CD4-positive, alpha-beta memory T cell (primary cell): ENCODE measurements at regions of chr4 and their contacts with region 1.

Region 1: GRCh38 chr4:148441986-148442831 is at the start of gene NR3C2:
- DNase-seq: peak; percentile 96 to 100 (median 98)
- H3K4me3 ChIP-seq: peak within 1 kb of the TSS; percentile 82 to 97
- H3K4me3 Mint-ChIP-seq: peak within 1 kb of the TSS; percentile 99 to 100 (median 100)
- H3K27ac ChIP-seq: peak within 1 kb of the TSS; percentile 92
- H3K27ac Mint-ChIP-seq: peak within 1 kb of the TSS; percentile 98 to 99 (median 99)
- H3K4me1 ChIP-seq: peaks cover 53% of the 10 kb centered on the region
- H3K4me1 Mint-ChIP-seq: peaks cover 45 to 72% (median 52%) of the 10 kb centered on the region in 4 donors
- H3K27me3 ChIP-seq: no peaks in the 10 kb centered on the region
- H3K27me3 Mint-ChIP-seq: no peaks in the 10 kb centered on the region
- total RNA-seq, gene NR3C2: 46.0 to 50.9 TPM

Region 2: DNA sequence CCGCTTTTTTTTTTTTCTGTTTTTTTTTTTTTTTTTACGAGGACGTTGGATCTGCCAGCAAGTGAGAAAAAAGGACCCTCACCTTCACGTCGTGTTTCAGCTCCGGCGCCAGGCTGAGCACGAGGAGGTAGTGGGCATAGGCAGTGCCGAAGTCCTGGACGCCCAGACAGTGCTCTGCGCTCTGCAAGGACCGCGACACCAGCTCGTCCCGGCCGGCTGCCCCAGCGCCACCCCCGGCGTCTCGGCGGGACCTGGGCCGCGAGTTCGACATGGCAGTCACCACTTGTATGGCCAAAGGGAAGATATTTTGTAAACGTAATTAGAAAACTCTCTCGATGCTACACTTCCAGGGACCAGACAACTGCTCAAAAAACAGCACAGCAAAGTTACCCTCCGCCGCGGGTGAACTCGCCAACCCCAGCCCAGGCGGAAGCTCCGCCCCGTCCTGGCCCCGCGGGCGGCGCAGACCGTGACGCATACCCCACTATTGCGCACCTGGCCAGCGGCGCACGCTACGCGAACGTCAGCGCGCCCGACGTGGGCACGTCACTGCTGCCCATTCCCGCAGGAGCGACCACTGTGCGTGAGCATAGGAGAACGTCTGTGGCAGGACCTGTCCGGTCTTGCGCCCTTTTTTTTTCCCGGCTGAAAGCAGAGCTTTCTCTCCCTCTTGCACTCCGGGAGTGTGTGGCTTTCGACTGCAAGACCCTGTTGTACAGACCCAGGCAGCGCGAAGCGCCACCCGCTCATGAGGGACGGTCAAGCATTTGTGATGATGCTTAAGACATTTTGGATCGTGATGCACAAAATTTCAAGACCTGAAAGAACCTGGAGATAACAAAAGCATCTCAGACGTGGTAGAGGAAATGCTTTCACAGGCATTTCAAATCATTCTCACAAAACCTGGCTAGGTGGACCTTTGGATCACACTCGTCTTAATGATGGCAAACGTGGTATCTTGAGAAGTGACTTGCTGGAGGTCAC is 758.2 kb before region 1 on chr4 and contains the start of gene PRMT9:
- CTCF ChIA-PET with region 1: no interaction called
- POLR2A ChIA-PET with region 1: interaction called, 11 read pairs
- intact Hi-C with region 1: loop called (anchors 1 kb)
- DNase-seq: peak; percentile 82 to 89 (median 85)
- H3K4me3 ChIP-seq: peak within 1 kb of the TSS; percentile 75 to 96
- H3K4me3 Mint-ChIP-seq: peak within 1 kb of the TSS; percentile 92 to 99 (median 96)
- H3K27ac ChIP-seq: peak within 1 kb of the TSS; percentile 89
- H3K27ac Mint-ChIP-seq: peak within 1 kb of the TSS; percentile 96 to 99 (median 98)
- H3K4me1 ChIP-seq: peaks cover 15% of the 10 kb centered on the region
- H3K4me1 Mint-ChIP-seq: peaks cover 25 to 42% (median 33%) of the 10 kb centered on the region in 4 donors
- H3K27me3 ChIP-seq: no peaks in the 10 kb centered on the region
- H3K27me3 Mint-ChIP-seq: peaks cover 3% of the 10 kb centered on the region in 2 donors
- total RNA-seq, gene PRMT9: 12.1 to 12.6 TPM

Region 3: DNA sequence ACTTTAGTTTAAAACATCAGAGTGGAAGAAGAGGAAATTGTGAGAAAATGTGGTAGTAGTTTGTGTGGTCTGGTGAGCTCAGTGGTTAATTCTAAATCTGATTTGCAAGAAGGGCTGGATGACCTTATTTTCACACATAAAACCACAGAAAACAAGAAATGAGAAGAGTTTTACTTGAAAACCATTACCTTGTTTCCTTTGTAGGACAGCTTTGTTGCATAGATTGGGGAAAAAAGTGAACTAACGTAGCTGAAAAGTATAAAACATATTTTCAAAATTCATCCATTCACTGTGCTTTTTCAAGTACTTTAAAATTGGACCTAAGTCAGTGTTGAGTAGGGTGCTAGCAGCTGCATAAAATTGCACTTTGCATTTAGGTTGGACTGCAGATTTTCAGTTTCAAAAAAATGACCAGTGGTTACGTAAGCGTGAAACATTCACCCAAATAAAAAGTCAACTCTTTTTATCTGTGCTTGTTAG is 499.0 kb before region 1 on chr4:
- CTCF ChIA-PET with region 1: no interaction called
- POLR2A ChIA-PET with region 1: interaction called, 15 read pairs
- intact Hi-C with region 1: no loop called
- DNase-seq: peak in 4 of 5 donors; percentile 35 to 51 (median 40)
- H3K4me3 ChIP-seq: no peak overlapping the region
- H3K4me3 Mint-ChIP-seq: peak overlapping the region in 7 of 8 donors; percentile 14 to 71 (median 54)
- H3K27ac ChIP-seq: peak overlapping the region; percentile 23
- H3K27ac Mint-ChIP-seq: peak overlapping the region; percentile 24 to 77 (median 53)
- H3K4me1 ChIP-seq: peaks cover 30% of the 10 kb centered on the region
- H3K4me1 Mint-ChIP-seq: peaks cover 23 to 32% (median 29%) of the 10 kb centered on the region in 4 donors
- H3K27me3 ChIP-seq: no peaks in the 10 kb centered on the region
- H3K27me3 Mint-ChIP-seq: no peaks in the 10 kb centered on the region

Region 4: GRCh38 chr4:148056869-148057268 is 385.3 kb before region 1 on chr4:
- CTCF ChIA-PET with region 1: interaction called, 13 read pairs
- POLR2A ChIA-PET with region 1: interaction called, 129 read pairs
- intact Hi-C with region 1: loop called (anchors 1 kb)
- DNase-seq: peak; percentile 37 to 77 (median 54)
- H3K4me3 ChIP-seq: no peak overlapping the region
- H3K4me3 Mint-ChIP-seq: peak overlapping the region in 6 of 8 donors; percentile 6 to 76 (median 44)
- H3K27ac ChIP-seq: peak overlapping the region; percentile 11
- H3K27ac Mint-ChIP-seq: peak overlapping the region; percentile 59 to 92 (median 85)
- H3K4me1 ChIP-seq: peaks cover 98% of the 10 kb centered on the region
- H3K4me1 Mint-ChIP-seq: peaks cover 71 to 98% (median 88%) of the 10 kb centered on the region in 4 donors
- H3K27me3 ChIP-seq: no peaks in the 10 kb centered on the region
- H3K27me3 Mint-ChIP-seq: no peaks in the 10 kb centered on the region

Region 5: DNA sequence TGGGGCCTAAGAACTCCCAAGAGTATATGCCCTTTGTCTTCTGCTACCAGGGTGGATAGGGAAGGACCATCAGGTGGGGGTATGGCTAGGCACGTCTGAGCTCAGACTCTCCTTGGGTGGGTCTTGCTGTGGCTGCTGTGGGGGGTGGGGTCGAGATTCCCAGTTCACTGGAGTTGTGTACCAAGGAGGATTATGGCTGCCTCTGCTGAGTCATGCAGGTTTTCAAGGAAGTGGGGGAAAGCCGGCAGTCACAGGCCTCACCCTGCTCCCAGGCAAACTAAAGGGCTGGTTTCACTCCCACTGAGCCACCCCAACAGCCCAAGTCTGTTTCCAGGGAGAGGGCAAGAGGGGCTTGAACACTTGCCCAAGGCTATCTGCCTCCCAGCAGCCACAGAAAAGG is 249.7 kb before region 1 on chr4:
- CTCF ChIA-PET with region 1: no interaction called
- POLR2A ChIA-PET with region 1: no interaction called
- intact Hi-C with region 1: no loop called
- DNase-seq: no peak
- H3K4me3 ChIP-seq: no peak overlapping the region
- H3K4me3 Mint-ChIP-seq: no peak overlapping the region
- H3K27ac ChIP-seq: no peak overlapping the region
- H3K27ac Mint-ChIP-seq: peak overlapping the region in 1 of 7 donors; percentile 23
- H3K4me1 ChIP-seq: no peaks in the 10 kb centered on the region
- H3K4me1 Mint-ChIP-seq: peaks cover 0 to 11% (median 3%) of the 10 kb centered on the region in 4 donors
- H3K27me3 ChIP-seq: no peaks in the 10 kb centered on the region
- H3K27me3 Mint-ChIP-seq: no peaks in the 10 kb centered on the region

Region 6: DNA sequence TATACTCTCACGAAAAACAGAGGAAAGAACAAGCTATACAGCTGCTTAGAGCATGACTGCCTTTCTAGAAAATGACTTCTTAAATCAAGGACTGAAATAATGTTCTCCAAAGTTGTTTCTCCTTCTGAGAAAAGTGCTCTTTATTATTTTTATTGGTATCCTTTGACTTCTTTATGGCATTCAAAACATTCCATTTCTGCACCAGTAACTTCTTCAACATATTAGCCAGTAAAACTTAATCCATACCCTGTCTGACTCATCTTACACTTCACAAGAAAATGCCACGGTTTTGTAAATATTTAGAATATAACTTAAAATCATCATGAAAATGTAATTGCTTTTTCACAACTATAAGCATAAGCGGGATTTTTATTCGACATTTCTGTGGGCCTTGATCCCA is 180.4 kb before region 1 on chr4:
- CTCF ChIA-PET with region 1: no interaction called
- POLR2A ChIA-PET with region 1: no interaction called
- intact Hi-C with region 1: no loop called
- DNase-seq: no peak
- H3K4me3 ChIP-seq: no peak overlapping the region
- H3K4me3 Mint-ChIP-seq: no peak overlapping the region
- H3K27ac ChIP-seq: no peak overlapping the region
- H3K27ac Mint-ChIP-seq: no peak overlapping the region
- H3K4me1 ChIP-seq: no peaks in the 10 kb centered on the region
- H3K4me1 Mint-ChIP-seq: peaks cover 12 to 39% (median 19%) of the 10 kb centered on the region in 4 donors
- H3K27me3 ChIP-seq: no peaks in the 10 kb centered on the region
- H3K27me3 Mint-ChIP-seq: no peaks in the 10 kb centered on the region

Region 7: DNA sequence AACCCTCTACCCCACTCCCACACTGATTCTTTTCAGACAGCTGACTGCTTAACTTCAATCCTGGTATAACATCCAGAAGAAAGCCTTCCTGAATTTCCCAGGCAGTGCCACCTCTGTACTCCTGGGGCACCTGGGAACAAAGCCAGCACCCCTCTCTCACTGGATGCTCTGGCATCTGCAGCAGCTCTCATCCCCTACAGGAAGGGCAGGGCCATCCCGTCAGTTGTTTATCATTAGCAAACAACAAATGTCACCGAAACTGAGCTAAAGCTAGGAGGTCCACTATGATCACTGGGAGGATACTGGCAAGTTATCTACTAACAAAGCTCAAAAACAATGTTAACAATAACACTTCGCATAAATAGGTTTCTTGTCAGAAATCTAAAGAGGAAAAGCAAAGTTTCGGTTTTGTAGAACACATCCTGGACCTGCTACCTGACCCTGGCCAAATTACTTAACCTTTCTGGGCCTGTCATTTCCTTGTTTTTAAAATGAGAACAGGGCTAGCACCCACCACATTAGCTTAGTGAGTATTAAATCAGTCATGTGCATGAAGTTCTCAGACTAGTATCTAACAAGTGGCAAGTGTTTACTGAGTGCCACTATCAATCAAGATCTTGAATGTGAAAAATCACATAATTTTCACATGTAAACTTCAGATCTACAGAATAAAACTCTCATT is 86.6 kb before region 1 on chr4:
- CTCF ChIA-PET with region 1: interaction called, 3 read pairs
- POLR2A ChIA-PET with region 1: interaction called, 12 read pairs
- intact Hi-C with region 1: no loop called
- DNase-seq: peak in 2 of 5 donors; percentile 4 to 11
- H3K4me3 ChIP-seq: peak overlapping the region in 1 of 2 donors; percentile 12
- H3K4me3 Mint-ChIP-seq: peak overlapping the region; percentile 41 to 80 (median 64)
- H3K27ac ChIP-seq: no peak overlapping the region
- H3K27ac Mint-ChIP-seq: peak overlapping the region; percentile 52 to 87 (median 77)
- H3K4me1 ChIP-seq: peaks cover 32% of the 10 kb centered on the region
- H3K4me1 Mint-ChIP-seq: peaks cover 26 to 54% (median 38%) of the 10 kb centered on the region in 4 donors
- H3K27me3 ChIP-seq: no peaks in the 10 kb centered on the region
- H3K27me3 Mint-ChIP-seq: no peaks in the 10 kb centered on the region

Region 8: GRCh38 chr4:148429206-148429605 is 13.0 kb before region 1 on chr4:
- CTCF ChIA-PET with region 1: interaction called, 6 read pairs
- POLR2A ChIA-PET with region 1: interaction called, 28 read pairs
- intact Hi-C with region 1: no loop called
- DNase-seq: no peak
- H3K4me3 ChIP-seq: no peak overlapping the region
- H3K4me3 Mint-ChIP-seq: peak overlapping the region in 4 of 8 donors; percentile 1 to 47 (median 28)
- H3K27ac ChIP-seq: no peak overlapping the region
- H3K27ac Mint-ChIP-seq: no peak overlapping the region
- H3K4me1 ChIP-seq: peaks cover 53% of the 10 kb centered on the region
- H3K4me1 Mint-ChIP-seq: peaks cover 51 to 89% (median 69%) of the 10 kb centered on the region in 4 donors
- H3K27me3 ChIP-seq: no peaks in the 10 kb centered on the region
- H3K27me3 Mint-ChIP-seq: no peaks in the 10 kb centered on the region

Region 9: DNA sequence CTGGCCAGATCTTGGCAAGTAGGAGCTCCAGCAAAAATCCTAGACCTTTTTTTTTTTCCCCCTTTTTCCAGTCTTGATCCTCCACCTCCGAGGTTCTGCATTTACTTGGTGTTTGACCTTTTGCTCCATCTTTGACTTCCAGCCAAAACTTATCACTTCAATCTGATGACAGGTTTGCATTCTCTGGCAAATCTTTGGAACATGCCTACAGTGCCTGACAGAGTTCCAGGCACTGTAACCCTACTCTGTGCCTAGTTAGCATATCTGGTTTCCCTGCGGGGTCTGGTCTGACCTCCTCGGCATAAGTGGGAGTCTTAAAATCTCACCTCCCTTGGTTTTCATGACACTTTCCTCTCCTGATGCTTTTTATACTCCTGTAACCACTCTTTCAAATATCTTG is 39.4 kb after region 1 on chr4:
- CTCF ChIA-PET with region 1: no interaction called
- POLR2A ChIA-PET with region 1: no interaction called
- intact Hi-C with region 1: no loop called
- DNase-seq: no peak
- H3K4me3 ChIP-seq: no peak overlapping the region
- H3K4me3 Mint-ChIP-seq: no peak overlapping the region
- H3K27ac ChIP-seq: no peak overlapping the region
- H3K27ac Mint-ChIP-seq: no peak overlapping the region
- H3K4me1 ChIP-seq: no peaks in the 10 kb centered on the region
- H3K4me1 Mint-ChIP-seq: no peaks in the 10 kb centered on the region
- H3K27me3 ChIP-seq: no peaks in the 10 kb centered on the region
- H3K27me3 Mint-ChIP-seq: peaks cover 2 to 5% of the 10 kb centered on the region in 2 donors

Region 10: DNA sequence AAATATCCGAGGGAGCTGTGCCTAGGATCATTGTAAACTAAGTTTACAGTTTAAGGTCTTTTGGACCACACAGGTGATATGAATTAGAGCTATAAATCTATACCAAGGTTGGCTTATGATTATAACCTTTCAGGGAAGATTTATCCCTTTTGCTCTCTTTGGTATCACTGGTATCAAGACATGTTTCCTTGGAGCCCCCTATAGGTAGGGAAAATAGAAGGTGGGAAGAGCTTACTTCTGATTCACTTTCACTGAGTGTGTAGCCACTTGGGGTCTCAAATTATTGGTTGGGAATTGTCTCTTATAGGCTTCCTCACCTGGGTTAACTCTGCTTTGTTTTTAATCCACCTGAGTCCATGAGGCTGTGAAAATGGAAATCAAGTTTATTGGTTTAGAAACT is 262.1 kb after region 1 on chr4:
- CTCF ChIA-PET with region 1: no interaction called
- POLR2A ChIA-PET with region 1: no interaction called
- intact Hi-C with region 1: no loop called
- DNase-seq: no peak
- H3K4me3 ChIP-seq: no peak overlapping the region
- H3K4me3 Mint-ChIP-seq: no peak overlapping the region
- H3K27ac ChIP-seq: no peak overlapping the region
- H3K27ac Mint-ChIP-seq: no peak overlapping the region
- H3K4me1 ChIP-seq: no peaks in the 10 kb centered on the region
- H3K4me1 Mint-ChIP-seq: no peaks in the 10 kb centered on the region
- H3K27me3 ChIP-seq: no peaks in the 10 kb centered on the region
- H3K27me3 Mint-ChIP-seq: no peaks in the 10 kb centered on the region